HEK293 (cell line): ENCODE measurements at regions of chr5 and their contacts with region 1.

Region 1: GRCh38 chr5:148820461-148821395 is 5.7 kb upstream of the ADRB2 start:
- H3K4me3 ChIP-seq: no peak overlapping the region
- H3K27ac ChIP-seq: no peak overlapping the region
- H3K4me1 ChIP-seq: peaks cover 5% of the 10 kb centered on the region; the same call in 1 of the 2 replicates
- CTCF ChIP-seq: peak; percentile 32

Region 2: GRCh38 chr5:148805326-148806290 is 15.1 kb before region 1 on chr5:
- CTCF ChIA-PET with region 1: interaction called, 12 read pairs
- POLR2A ChIA-PET with region 1: no interaction called
- H3K4me3 ChIP-seq: no peak overlapping the region
- H3K27ac ChIP-seq: no peak overlapping the region; the same call in 1 of the 2 replicates
- H3K4me1 ChIP-seq: peaks cover 29% of the 10 kb centered on the region
- CTCF ChIP-seq: no peak